WTC11 (cell line): ENCODE measurements at regions of chr13 and their contacts with region 1.

Region 1: DNA sequence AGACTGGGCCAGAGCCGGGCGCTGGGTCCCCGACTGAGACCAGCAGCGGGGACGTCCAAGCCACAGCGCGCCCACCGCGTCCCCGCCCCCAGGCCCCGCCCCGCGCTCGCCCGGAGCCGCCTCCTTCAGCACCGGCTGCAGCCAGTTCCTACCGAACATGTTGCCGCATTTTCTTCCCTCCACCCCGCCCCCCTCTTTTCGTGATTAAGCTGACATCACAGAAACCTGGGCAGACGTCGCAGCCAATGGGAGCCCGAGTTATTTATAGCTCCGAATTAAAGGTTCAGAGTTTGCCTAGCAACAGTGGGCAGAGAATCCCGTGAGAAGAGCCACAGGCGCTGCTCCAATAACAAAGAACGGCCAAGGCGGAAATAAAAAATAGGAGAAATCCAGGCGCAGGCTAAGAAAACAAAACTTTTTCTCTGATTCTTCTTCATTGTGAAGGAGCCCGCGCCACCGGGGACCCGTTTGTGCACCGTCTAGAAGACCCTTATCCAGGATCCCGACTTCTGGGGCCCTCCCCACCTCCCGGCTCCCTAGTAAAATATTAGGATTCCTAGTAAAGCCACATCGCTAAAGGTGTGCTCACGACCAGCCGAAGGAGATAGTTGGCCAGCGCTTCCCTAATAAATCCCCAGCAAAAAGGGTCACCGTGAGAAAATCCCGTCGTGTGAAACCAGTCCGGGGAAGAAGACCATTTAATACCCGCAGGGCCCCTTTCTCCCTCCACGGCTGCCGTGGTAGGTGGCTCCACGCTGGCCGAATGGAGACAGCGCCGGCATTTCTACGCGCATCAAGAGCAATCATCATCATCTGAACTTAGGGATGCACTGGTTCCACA is 61.7 kb downstream of the SERP2 start:
- DNase-seq: peak; percentile 97
- ATAC-seq: peak; percentile 66
- H3K4me3 Mint-ChIP-seq: peak overlapping the region; percentile 94
- H3K27ac Mint-ChIP-seq: peak overlapping the region; percentile 99
- H3K4me1 Mint-ChIP-seq: peaks cover 27% of the 10 kb centered on the region
- H3K27me3 Mint-ChIP-seq: no peaks in the 10 kb centered on the region
- CTCF ChIP-seq: no peak

Region 2: DNA sequence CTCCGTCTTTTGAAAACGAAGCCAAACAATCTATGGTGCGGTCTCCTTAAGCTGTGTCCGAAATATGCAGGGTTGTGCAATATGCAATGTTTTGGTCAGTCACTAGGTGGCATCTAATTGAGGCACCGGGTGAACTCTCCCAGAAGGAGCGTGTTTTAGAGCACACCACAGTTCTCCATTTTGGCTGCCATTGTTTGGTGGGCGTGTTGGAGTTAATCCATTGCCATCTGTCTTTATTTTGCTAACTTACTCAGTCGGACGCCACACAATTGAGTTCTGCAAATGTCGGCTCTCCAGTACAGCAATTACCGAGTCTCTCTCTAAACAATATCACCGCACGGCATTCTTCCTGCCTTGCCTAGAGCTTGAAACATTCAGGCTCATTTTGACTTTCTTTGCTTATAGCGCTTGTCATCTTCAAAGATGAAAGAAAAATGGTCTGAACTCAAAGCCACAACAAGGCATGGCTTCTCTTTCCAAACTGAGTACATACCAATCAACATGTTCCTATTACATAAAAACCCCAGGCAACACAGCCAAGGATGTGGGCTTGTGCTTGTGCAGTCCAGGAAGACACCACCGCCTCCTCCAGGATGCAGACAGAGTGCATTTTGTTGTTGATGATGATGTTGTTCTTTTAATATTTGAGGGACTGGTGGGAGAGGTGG is 243.7 kb before region 1 on chr13:
- CTCF ChIA-PET with region 1: interaction called, 12 read pairs
- POLR2A ChIA-PET with region 1: interaction called, 8 read pairs
- DNase-seq: peak; percentile 21
- ATAC-seq: peak; percentile 98
- H3K4me3 Mint-ChIP-seq: no peak overlapping the region
- H3K27ac Mint-ChIP-seq: 0 out of 2 replicates have a peak overlapping the region, but pooled peaks have one; percentile 6
- H3K4me1 Mint-ChIP-seq: 0 out of 2 replicates have a peak, but pooled peaks cover 3% of the 10 kb centered on the region
- H3K27me3 Mint-ChIP-seq: no peaks in the 10 kb centered on the region
- CTCF ChIP-seq: peak; percentile 32; the same call in 1 of the 2 replicates

Region 3: GRCh38 chr13:44306401-44307192 is 128.8 kb before region 1 on chr13:
- CTCF ChIA-PET with region 1: interaction called, 6 read pairs
- POLR2A ChIA-PET with region 1: interaction called, 10 read pairs
- DNase-seq: peak; percentile 38
- ATAC-seq: peak; percentile 84
- H3K4me3 Mint-ChIP-seq: peak overlapping the region; percentile 67
- H3K27ac Mint-ChIP-seq: no peak overlapping the region
- H3K4me1 Mint-ChIP-seq: peaks cover 40% of the 10 kb centered on the region
- H3K27me3 Mint-ChIP-seq: peaks cover 80% of the 10 kb centered on the region
- CTCF ChIP-seq: no peak

Region 4: GRCh38 chr13:44396701-44397580 is 38.4 kb before region 1 on chr13:
- CTCF ChIA-PET with region 1: interaction called, 4 read pairs
- POLR2A ChIA-PET with region 1: interaction called, 12 read pairs
- DNase-seq: no peak
- ATAC-seq: peak; percentile 62
- H3K4me3 Mint-ChIP-seq: no peak overlapping the region
- H3K27ac Mint-ChIP-seq: no peak overlapping the region
- H3K4me1 Mint-ChIP-seq: peaks cover 29% of the 10 kb centered on the region
- H3K27me3 Mint-ChIP-seq: no peaks in the 10 kb centered on the region; the same call in 1 of the 2 replicates
- CTCF ChIP-seq: no peak

Region 5: GRCh38 chr13:44416297-44416696 is 19.1 kb before region 1 on chr13:
- CTCF ChIA-PET with region 1: interaction called, 7 read pairs
- POLR2A ChIA-PET with region 1: interaction called, 31 read pairs
- DNase-seq: no peak
- ATAC-seq: peak; percentile 7
- H3K4me3 Mint-ChIP-seq: no peak overlapping the region
- H3K27ac Mint-ChIP-seq: no peak overlapping the region
- H3K4me1 Mint-ChIP-seq: peaks cover 60% of the 10 kb centered on the region
- H3K27me3 Mint-ChIP-seq: peaks cover 12% of the 10 kb centered on the region
- CTCF ChIP-seq: no peak